Activated CD4-positive, alpha-beta memory T cell treated with anti-CD3 and anti-CD28 coated beads, Interleukin-2, amount 10 ng/mL, durations not matched to agents 7 days and 5 days (primary cell): ENCODE measurements at regions of chr19 and their contacts with region 1.

Region 1: DNA sequence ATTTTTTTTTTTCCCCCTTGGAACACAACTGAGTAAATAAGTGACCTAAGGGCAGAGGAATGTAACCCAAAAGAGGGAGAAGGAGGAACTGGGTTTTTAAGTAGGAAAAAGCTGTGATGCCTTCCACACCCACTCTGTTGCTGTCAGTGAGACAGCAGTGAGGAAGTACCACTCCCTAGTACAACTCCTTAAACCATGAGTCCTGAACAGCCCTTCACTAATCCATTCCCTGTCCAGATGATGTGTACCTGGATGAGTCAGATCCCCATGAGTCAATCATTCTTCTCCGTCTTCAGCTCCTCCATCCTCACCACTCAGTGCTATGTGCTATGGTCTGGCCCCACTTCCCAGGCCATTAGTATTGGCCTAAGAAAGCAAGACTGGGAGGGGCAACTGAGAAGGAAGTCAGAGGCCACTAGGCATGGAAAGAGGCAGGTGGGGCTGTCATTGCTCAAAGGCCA is 12.9 kb upstream of the CXCL17 start:
- DNase-seq: no peak
- H3K4me3 Mint-ChIP-seq: no peak overlapping the region
- H3K27ac Mint-ChIP-seq: no peak overlapping the region
- H3K4me1 Mint-ChIP-seq: peaks cover 48% of the 10 kb centered on the region
- H3K27me3 Mint-ChIP-seq: peaks cover 2% of the 10 kb centered on the region

Region 2: GRCh38 chr19:42412227-42412626 is 43.4 kb before region 1 on chr19:
- CTCF ChIA-PET with region 1: no interaction called
- POLR2A ChIA-PET with region 1: no interaction called
- DNase-seq: no peak
- H3K4me3 Mint-ChIP-seq: no peak overlapping the region
- H3K27ac Mint-ChIP-seq: no peak overlapping the region
- H3K4me1 Mint-ChIP-seq: peaks cover 3% of the 10 kb centered on the region
- H3K27me3 Mint-ChIP-seq: no peaks in the 10 kb centered on the region

Region 3: DNA sequence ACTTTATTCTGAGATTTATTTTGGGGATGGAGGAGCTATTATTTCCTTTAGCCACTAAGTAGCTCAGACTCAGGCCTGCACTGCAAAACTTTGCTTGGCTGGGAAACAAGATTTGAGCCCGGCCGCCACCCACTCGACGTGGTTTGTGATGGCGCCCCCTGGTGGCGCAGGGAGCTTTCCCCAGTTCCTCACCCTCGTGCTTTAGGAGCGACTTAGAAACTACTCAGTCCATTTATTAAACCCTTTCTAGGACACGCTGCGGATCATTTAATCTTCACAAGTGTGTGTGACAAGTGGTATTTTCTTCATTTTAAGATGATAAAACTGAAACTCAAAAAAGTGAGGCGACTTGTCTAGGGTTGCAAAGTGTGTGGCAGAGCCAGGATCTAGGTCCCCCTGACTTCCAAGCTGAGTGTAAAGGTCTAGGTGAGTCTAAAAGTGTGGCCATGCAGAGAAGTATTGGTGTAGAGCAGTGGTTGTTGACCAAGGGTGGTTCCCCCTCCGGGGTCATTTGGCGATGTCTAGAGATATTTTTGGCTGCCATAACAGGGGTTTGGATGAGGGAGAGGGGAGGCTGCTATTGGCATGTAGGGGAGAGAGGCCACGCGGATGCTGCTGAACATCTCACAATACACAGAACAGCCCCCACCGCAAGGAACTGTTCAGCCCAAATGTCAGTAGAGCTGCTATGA is 15.1 kb before region 1 on chr19:
- CTCF ChIA-PET with region 1: interaction called, 91 read pairs
- POLR2A ChIA-PET with region 1: interaction called, 18 read pairs
- DNase-seq: peak; percentile 84
- H3K4me3 Mint-ChIP-seq: no peak overlapping the region
- H3K27ac Mint-ChIP-seq: peak overlapping the region; percentile 25
- H3K4me1 Mint-ChIP-seq: peaks cover 29% of the 10 kb centered on the region
- H3K27me3 Mint-ChIP-seq: peaks cover 5% of the 10 kb centered on the region